Activated naive CD4-positive, alpha-beta T cell treated with anti-CD3 and anti-CD28 coated beads, Interleukin-2, amount 10 ng/mL, durations not matched to agents 7 days and 5 days (primary cell): ENCODE measurements at regions of chr16 and their contacts with region 1.

Region 1: GRCh38 chr16:3099732-3100499 is 822 bp upstream of the ZSCAN10 start:
- DNase-seq: peak; percentile 95
- H3K4me3 Mint-ChIP-seq: peak overlapping the region; percentile 73
- H3K27ac Mint-ChIP-seq: peak overlapping the region; percentile 78
- H3K4me1 Mint-ChIP-seq: peaks cover 79% of the 10 kb centered on the region
- H3K27me3 Mint-ChIP-seq: peaks cover 18% of the 10 kb centered on the region

Region 2: DNA sequence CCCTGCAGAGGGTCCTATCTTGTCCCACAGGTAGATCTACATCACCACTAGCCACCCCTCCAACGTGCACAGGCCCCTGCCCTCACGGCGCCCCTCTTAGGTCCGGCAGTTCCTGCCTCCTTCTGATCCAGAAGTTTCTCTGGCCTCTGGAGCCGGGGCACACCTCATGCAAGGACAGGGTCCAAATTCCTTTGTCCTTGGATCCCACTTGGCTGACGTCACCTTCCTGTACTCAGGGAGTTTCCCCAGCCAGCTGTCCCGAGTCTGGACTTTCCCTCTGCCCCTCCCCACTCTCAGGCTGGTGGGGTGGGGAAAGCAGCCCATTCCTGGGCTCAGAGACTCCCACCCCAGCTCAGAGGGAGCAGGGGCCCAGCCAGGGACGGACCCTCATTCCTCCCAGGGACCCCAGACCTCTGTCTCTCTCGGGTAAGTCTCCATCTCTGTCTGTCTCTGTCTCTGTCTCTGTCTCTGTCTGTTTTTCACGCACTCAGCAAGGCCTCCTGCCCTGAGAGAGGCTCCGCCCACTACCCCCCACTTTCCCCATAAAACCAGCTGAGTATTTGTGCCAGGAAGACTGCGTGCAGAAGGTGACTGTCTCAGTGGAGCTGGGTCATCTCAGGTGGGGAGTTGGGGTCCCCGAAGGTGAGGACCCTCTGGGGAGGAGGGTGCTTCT is 34.7 kb before region 1 on chr16 and contains the start of gene IL32:
- CTCF ChIA-PET with region 1: interaction called, 21 read pairs
- DNase-seq: peak; percentile 81
- H3K4me3 Mint-ChIP-seq: peak within 1 kb of the TSS; percentile 95
- H3K27ac Mint-ChIP-seq: peak within 1 kb of the TSS; percentile 94
- H3K4me1 Mint-ChIP-seq: peaks cover 78% of the 10 kb centered on the region
- H3K27me3 Mint-ChIP-seq: no peaks in the 10 kb centered on the region

Region 3: GRCh38 chr16:3234543-3235541 is 134.9 kb after region 1 on chr16 and contains the start of gene ZNF200:
- CTCF ChIA-PET with region 1: no interaction called
- DNase-seq: peak; percentile 97
- H3K4me3 Mint-ChIP-seq: peak within 1 kb of the TSS; percentile 91
- H3K27ac Mint-ChIP-seq: peak within 1 kb of the TSS; percentile 95
- H3K4me1 Mint-ChIP-seq: peaks cover 43% of the 10 kb centered on the region
- H3K27me3 Mint-ChIP-seq: peaks cover 9% of the 10 kb centered on the region